ENCODE measurements at regions of chr19 and their contacts with region 1.

Region 1: DNA sequence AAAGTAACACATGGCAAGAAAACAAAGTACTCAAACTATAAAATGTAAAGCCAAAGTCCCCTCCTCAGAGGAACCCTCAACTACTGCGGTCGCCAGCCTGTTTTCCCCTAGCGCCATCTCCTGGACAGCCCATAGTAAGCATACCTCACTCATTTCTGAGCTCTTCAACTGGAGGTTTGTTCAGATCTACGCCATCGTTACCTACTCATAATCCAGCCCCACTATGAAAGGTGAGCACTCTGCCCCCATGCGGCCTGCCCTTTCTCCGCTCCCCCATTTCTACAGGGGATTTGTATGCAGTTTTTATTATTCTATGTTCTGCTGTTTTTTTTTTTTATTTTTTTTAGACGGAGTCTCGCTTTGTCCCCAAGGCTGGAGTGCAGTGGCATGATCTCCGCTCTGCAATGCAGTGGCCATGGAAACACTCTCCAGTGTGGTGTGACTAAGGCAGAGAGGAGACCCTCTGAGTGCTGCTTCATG is 26.2 kb downstream of the OPA3 start:
- DNase-seq: peak; percentile 78
- ATAC-seq: peak; percentile 89
- H3K4me3 Mint-ChIP-seq: no peak overlapping the region
- H3K27ac Mint-ChIP-seq: no peak overlapping the region
- H3K4me1 Mint-ChIP-seq: peaks cover 12% of the 10 kb centered on the region; the same call in 1 of the 2 replicates
- H3K27me3 Mint-ChIP-seq: no peaks in the 10 kb centered on the region
- CTCF ChIP-seq: no peak

Region 2: GRCh38 chr19:45478454-45479238 is 79.8 kb before region 1 on chr19:
- CTCF ChIA-PET with region 1: interaction called, 20 read pairs
- POLR2A ChIA-PET with region 1: no interaction called
- DNase-seq: peak; percentile 90
- ATAC-seq: peak; percentile 94
- H3K4me3 Mint-ChIP-seq: peak overlapping the region; percentile 69
- H3K27ac Mint-ChIP-seq: peak overlapping the region; percentile 99
- H3K4me1 Mint-ChIP-seq: peaks cover 23% of the 10 kb centered on the region
- H3K27me3 Mint-ChIP-seq: peaks cover 47% of the 10 kb centered on the region
- CTCF ChIP-seq: peak; percentile 90

Region 3: DNA sequence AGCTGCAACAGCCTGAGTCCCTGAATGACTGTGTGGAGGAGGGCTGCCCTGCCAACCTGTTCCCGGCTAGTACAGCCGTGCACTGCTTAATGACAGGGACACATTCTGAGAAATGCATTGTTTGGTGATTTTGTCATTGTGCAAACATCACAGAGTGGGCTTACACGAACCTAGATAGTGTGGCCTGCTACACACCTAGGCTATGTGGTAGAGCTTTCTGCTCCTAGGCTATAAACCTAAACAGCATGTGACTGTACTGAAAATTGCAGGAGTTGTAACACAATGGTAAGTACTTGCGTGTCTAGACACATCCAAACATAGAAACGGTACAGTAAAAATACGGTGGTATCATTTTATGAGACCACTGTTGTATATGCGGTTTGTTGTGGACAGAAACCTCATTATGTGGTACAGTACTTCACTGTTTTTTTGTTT is 16.2 kb before region 1 on chr19:
- CTCF ChIA-PET with region 1: interaction called, 34 read pairs
- POLR2A ChIA-PET with region 1: interaction called, 3 read pairs
- DNase-seq: no peak
- ATAC-seq: no peak
- H3K4me3 Mint-ChIP-seq: no peak overlapping the region
- H3K27ac Mint-ChIP-seq: no peak overlapping the region
- H3K4me1 Mint-ChIP-seq: peaks cover 3% of the 10 kb centered on the region; the same call in 1 of the 2 replicates
- H3K27me3 Mint-ChIP-seq: peaks cover 7% of the 10 kb centered on the region
- CTCF ChIP-seq: no peak

Region 4: GRCh38 chr19:45577111-45577905 is 18.9 kb after region 1 on chr19:
- CTCF ChIA-PET with region 1: interaction called, 16 read pairs
- POLR2A ChIA-PET with region 1: no interaction called
- DNase-seq: no peak
- ATAC-seq: peak; percentile 83
- H3K4me3 Mint-ChIP-seq: peak overlapping the region; percentile 20
- H3K27ac Mint-ChIP-seq: peak overlapping the region; percentile 91
- H3K4me1 Mint-ChIP-seq: peaks cover 25% of the 10 kb centered on the region
- H3K27me3 Mint-ChIP-seq: no peaks in the 10 kb centered on the region
- CTCF ChIP-seq: no peak

Region 5: DNA sequence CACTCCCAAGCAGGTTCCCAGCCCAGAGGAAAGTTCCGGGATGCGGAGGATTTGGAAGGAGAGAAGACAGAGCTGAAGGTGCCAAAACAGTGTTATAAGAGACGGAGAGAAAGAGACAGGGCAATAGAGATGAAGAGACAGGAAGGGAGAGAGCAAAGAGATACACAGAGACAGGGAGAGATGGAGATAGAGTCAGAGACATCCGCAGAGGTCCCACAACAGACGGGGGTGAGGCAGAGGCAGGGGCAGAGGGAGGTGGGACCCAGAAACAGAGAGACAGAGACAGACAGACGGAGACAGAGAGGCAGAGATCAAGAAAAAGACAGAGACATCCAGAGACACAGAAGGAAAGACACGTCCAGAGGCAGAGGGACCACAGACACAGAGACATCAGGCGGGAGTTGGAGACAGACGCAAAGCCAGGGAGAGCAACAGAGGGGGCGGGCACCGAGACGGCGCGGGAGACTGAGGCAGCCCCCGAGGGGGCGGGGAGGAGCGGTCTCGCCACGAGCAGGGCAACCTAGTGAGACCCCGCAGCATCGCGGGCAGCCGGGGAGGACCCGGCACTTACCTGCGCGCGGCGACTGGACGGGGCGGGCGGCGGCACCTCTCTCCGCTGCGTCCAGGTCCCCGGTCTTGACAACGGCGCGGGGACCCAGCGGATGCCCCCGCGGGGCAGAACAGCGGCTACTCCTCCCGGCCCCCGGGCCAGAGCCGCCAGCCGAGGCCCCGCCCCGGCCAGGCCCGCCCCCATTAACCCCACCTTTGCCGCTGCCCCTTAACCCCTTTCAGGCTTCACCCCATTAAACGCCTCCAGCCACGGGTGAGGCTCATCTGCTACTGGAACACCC is 43.3 kb after region 1 on chr19 and contains the start of gene GPR4:
- CTCF ChIA-PET with region 1: interaction called, 15 read pairs
- POLR2A ChIA-PET with region 1: no interaction called
- DNase-seq: peak; percentile 79
- ATAC-seq: peak; percentile 85
- H3K4me3 Mint-ChIP-seq: peak within 1 kb of the TSS; percentile 65
- H3K27ac Mint-ChIP-seq: no peak within 1 kb of the TSS
- H3K4me1 Mint-ChIP-seq: peaks cover 54% of the 10 kb centered on the region
- H3K27me3 Mint-ChIP-seq: peaks cover 74% of the 10 kb centered on the region
- CTCF ChIP-seq: no peak
- total RNA-seq, gene GPR4: 0.11 to 0.48 TPM (median 0.44 TPM) in 3 replicates

Region 6: GRCh38 chr19:45692187-45693105 is 134.0 kb after region 1 on chr19 and contains the start of gene QPCTL:
- CTCF ChIA-PET with region 1: interaction called, 13 read pairs
- POLR2A ChIA-PET with region 1: no interaction called
- DNase-seq: peak; percentile 97
- ATAC-seq: peak; percentile 95
- H3K4me3 Mint-ChIP-seq: peak within 1 kb of the TSS; percentile 96
- H3K27ac Mint-ChIP-seq: peak within 1 kb of the TSS; percentile 100
- H3K4me1 Mint-ChIP-seq: peaks cover 6% of the 10 kb centered on the region; the same call in 1 of the 2 replicates
- H3K27me3 Mint-ChIP-seq: peaks cover 3% of the 10 kb centered on the region; the same call in 1 of the 2 replicates
- CTCF ChIP-seq: no peak
- total RNA-seq, gene QPCTL: 23.8 to 33.3 TPM (median 27.5 TPM) in 3 replicates

Region 7: DNA sequence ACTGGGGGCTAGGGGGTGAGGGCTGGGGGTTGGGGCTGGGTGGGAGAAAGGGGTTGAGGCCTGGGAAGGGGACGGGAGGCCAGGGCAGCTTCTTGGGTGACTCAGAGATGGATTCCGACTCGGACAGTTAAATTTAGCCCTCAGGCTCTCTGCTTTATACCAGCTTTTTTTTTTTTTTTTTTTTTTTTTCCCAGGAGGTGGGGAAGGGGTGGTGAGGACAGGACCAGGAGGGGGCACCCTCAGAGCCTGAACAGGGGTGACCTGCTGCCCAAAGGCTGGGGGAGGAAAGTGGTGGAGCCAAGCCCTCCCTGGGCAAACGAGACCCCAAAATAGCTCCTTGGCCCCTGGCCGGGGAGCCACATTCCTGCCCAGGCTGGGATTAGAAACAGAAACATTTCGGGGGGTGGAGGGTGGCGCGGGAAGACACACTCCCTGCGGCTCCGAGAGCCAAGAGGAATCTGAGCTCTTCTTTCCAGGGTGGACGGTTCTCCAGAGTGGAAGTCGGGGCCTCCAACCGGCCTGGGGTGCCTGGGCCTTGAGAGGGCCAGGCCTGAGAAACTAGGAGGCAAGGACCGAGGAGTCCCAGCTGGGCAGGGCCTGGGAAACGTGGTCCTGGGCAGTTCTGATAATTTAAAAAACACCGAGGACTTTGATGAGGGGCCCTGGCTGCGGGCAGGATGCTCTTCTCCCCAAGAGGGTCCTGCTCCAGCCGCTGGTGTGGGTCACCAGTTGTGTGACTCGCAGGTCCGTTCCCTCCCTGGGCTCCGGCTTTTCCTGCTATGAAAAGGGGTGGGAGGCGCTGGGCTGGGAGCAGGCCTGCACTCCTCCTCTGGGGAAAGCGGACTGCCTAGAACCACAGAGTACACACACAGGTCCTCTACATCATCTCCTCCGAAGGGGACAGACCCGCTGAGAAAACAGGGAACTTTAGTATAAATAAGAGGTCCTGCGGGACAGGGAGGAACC is 224.7 kb after region 1 on chr19:
- CTCF ChIA-PET with region 1: no interaction called
- POLR2A ChIA-PET with region 1: no interaction called
- DNase-seq: no peak
- ATAC-seq: no peak
- H3K4me3 Mint-ChIP-seq: no peak overlapping the region
- H3K27ac Mint-ChIP-seq: no peak overlapping the region; the same call in 1 of the 2 replicates
- H3K4me1 Mint-ChIP-seq: peaks cover 33% of the 10 kb centered on the region
- H3K27me3 Mint-ChIP-seq: peaks cover 32% of the 10 kb centered on the region
- CTCF ChIP-seq: no peak